ENCODE measurements at regions of chr9 and their contacts with region 1.

Region 1: DNA sequence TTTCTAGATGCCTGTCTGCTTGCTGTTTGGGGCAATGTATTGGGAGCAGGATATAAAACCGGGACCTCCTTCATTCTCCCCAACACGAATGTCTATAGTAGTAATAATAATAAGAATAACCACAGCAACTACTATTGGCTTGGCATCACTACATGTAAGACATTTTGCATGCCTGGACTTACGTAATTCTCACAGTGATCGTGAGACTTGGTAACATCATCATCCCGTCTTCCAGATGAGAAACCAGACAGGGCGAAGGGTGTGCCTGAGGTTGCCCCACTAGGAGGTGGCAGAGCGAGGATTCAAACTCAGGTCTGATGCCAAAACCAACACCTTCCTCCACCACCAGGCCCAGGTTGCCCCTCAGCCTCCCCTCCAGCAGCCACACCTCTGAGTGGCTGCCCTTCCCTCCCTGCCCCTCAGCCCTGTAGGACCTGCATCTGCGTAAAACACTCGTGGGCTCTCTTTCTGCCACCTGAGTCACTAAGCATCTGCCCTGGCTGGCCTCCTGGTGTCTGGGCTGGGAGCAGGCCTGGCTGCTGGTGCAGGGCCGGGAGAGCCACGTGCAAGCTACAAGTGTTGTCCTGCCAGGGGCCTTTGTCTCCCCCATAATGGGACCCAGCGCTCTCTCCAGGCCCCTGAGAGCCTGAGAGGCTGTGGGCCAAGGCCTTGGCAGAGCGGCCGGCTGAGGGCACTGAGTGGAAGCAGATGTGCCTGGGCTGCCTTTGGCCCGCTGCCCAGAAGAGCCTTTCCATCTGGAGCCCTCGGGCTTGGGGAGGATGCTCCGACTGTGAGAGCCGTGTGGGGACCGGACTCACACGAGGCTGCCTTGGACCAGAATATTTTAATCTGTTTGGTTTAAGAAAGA is 185.3 kb downstream of the RGS3 start:
- DNase-seq: peak in 1 of 2 donors; percentile 83
- H3K4me3 ChIP-seq: no peak overlapping the region
- H3K27ac ChIP-seq: peak overlapping the region in 1 of 5 donors; percentile 43
- H3K4me1 ChIP-seq: peaks cover 0 to 6% (median 0%) of the 10 kb centered on the region in 4 donors
- H3K27me3 ChIP-seq: no peaks in the 10 kb centered on the region
- CTCF ChIP-seq: no peak
- EP300 ChIP-seq: no peak
- POLR2A ChIP-seq: no peak

Region 2: GRCh38 chr9:113484258-113484730 is 164.5 kb before region 1 on chr9:
- intact Hi-C with region 1: no loop called
- DNase-seq: peak; percentile 40 to 84
- H3K4me3 ChIP-seq: no peak overlapping the region
- H3K27ac ChIP-seq: peak overlapping the region; percentile 43 to 84 (median 72)
- H3K4me1 ChIP-seq: peaks cover 17 to 62% (median 32%) of the 10 kb centered on the region in 4 donors
- H3K27me3 ChIP-seq: no peaks in the 10 kb centered on the region
- CTCF ChIP-seq: no peak
- EP300 ChIP-seq: no peak
- POLR2A ChIP-seq: no peak

Region 3: DNA sequence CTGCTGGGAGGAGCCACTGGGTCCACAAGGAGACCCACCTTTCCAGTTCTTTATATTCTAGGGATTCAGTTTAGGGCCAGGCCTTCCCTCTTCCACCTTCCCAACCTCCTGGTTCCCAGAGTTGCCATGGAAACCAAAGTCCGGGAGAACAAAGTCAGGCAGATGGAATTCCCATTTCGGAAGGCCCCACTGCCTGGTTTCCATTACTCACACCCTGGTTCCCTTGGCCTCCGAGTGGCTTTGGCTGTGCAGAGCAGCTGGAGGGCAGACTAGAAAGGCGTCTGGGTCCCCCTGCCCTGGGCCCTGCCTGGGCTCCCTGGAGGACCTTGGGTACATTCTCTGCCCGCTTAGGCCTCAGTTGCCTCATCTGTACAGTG is 49.2 kb before region 1 on chr9:
- intact Hi-C with region 1: loop called (anchors 5 kb)
- DNase-seq: no peak
- H3K4me3 ChIP-seq: no peak overlapping the region
- H3K27ac ChIP-seq: peak overlapping the region in 2 of 5 donors; percentile 4 to 13
- H3K4me1 ChIP-seq: peaks cover 30 to 77% (median 50%) of the 10 kb centered on the region in 4 donors
- H3K27me3 ChIP-seq: no peaks in the 10 kb centered on the region
- CTCF ChIP-seq: no peak
- EP300 ChIP-seq: no peak
- POLR2A ChIP-seq: no peak